Body of pancreas (tissue), 4 donors: ENCODE measurements at regions of chr2 and their contacts with region 1.

Region 1: GRCh38 chr2:96860065-96861043 is 2.5 kb upstream of the ANKRD39 start:
- DNase-seq: no peak
- ATAC-seq: no peak
- H3K4me3 ChIP-seq: no peak overlapping the region
- H3K27ac ChIP-seq: no peak overlapping the region
- H3K4me1 ChIP-seq: peaks cover 24% of the 10 kb centered on the region
- H3K27me3 ChIP-seq: no peaks in the 10 kb centered on the region
- CTCF ChIP-seq: no peak
- POLR2A ChIP-seq: no peak

Region 2: DNA sequence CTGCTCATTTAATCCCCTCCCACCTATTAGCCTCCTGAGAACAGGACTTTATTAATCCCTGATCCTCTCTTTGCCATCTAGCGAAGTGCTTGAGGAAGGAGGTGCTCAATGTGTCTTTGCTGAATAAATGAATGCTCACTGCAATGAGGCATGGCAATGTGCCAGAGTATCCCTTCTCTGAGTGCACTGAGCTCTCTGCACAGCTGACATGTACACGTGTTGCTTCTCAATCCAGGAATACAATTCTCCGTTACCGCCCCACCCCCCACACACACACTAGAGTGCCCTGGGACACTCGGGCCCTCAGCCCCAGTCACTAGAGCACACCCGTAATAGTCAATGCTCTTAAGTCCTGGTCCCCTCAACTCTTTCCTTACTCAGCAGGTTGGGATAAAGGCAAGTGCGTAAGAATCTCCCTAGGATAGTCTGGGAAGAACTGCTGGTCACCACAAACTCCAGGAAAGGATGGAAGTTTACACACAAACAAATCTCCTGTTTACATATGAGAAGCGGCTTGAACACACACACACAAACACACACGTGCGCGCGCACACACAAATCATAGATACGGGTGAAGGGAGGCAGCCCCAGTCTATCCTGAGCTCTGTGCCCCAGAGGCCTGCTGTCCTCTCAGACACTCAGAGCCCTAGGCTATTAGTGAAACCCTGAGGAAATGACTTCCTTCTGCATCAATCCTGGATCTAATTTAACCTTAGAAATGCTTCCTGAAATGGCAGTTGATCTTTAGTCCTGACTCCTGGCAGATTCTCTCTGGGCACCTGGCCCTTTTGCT is 84.9 kb after region 1 on chr2:
- intact Hi-C with region 1: loop called (anchors 5 kb)
- DNase-seq: no peak
- ATAC-seq: no peak
- H3K4me3 ChIP-seq: no peak overlapping the region
- H3K27ac ChIP-seq: no peak overlapping the region
- H3K4me1 ChIP-seq: no peaks in the 10 kb centered on the region
- H3K27me3 ChIP-seq: no peaks in the 10 kb centered on the region
- CTCF ChIP-seq: no peak
- POLR2A ChIP-seq: no peak